ENCODE measurements at regions of chr9 and their contacts with region 1.

Region 1: DNA sequence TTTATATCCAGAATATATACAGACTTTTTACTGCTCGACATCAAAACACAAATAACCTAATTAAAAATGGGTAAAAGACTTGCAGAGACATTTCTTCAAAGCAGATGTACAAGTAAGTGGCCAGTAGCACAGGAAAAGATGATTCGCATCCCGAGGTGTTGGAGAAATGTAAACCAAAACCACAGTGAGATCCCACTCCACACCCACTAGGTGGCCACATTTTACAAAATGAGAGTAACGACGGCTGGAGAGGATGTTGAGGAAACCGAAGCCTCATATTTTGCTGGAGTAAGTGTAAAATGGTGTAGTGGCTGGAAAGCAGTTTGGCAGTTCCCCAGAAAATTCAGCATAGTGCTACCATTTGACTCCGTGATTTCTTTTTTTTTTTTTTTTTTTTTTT is 21.2 kb upstream of the GBGT1 start:
- DNase-seq: peak; percentile 72
- H3K4me3 ChIP-seq: no peak overlapping the region
- H3K27ac ChIP-seq: no peak overlapping the region
- H3K4me1 ChIP-seq: no peaks in the 10 kb centered on the region
- H3K27me3 ChIP-seq: peaks cover 5 to 9% of the 10 kb centered on the region in 2 experiments
- CTCF ChIP-seq: peak; percentile 57 to 60
- POLR2A ChIP-seq: no peak

Region 2: GRCh38 chr9:132965478-132965877 is 219.5 kb before region 1 on chr9:
- CTCF ChIA-PET with region 1: no interaction called
- POLR2A ChIA-PET with region 1: no interaction called
- dilution Hi-C with region 1: no loop called
- intact Hi-C with region 1: no loop called
- DNase-seq: no peak
- H3K4me3 ChIP-seq: no peak overlapping the region
- H3K27ac ChIP-seq: no peak overlapping the region
- H3K4me1 ChIP-seq: no peaks in the 10 kb centered on the region
- H3K27me3 ChIP-seq: peaks cover 2 to 3% of the 10 kb centered on the region in 2 experiments
- CTCF ChIP-seq: no peak
- POLR2A ChIP-seq: no peak

Region 3: GRCh38 chr9:132982458-132982857 is 202.5 kb before region 1 on chr9:
- CTCF ChIA-PET with region 1: no interaction called
- POLR2A ChIA-PET with region 1: no interaction called
- dilution Hi-C with region 1: no loop called
- intact Hi-C with region 1: no loop called
- DNase-seq: no peak
- H3K4me3 ChIP-seq: no peak overlapping the region
- H3K27ac ChIP-seq: no peak overlapping the region
- H3K4me1 ChIP-seq: no peaks in the 10 kb centered on the region
- H3K27me3 ChIP-seq: peaks cover 21% of the 10 kb centered on the region in 2 experiments
- CTCF ChIP-seq: no peak
- POLR2A ChIP-seq: no peak

Region 4: GRCh38 chr9:133089271-133089671 is 95.7 kb before region 1 on chr9:
- CTCF ChIA-PET with region 1: no interaction called
- POLR2A ChIA-PET with region 1: no interaction called
- dilution Hi-C with region 1: no loop called
- intact Hi-C with region 1: no loop called
- DNase-seq: no peak
- H3K4me3 ChIP-seq: no peak overlapping the region
- H3K27ac ChIP-seq: no peak overlapping the region
- H3K4me1 ChIP-seq: no peaks in the 10 kb centered on the region
- H3K27me3 ChIP-seq: no peaks in the 10 kb centered on the region
- CTCF ChIP-seq: no peak
- POLR2A ChIP-seq: no peak

Region 5: GRCh38 chr9:133103183-133103986 is 81.6 kb before region 1 on chr9:
- CTCF ChIA-PET with region 1: interaction called, 3 read pairs
- POLR2A ChIA-PET with region 1: no interaction called
- dilution Hi-C with region 1: no loop called
- intact Hi-C with region 1: loop called (anchors 1 kb)
- DNase-seq: peak; percentile 50
- H3K4me3 ChIP-seq: no peak overlapping the region
- H3K27ac ChIP-seq: no peak overlapping the region
- H3K4me1 ChIP-seq: no peaks in the 10 kb centered on the region
- H3K27me3 ChIP-seq: no peaks in the 10 kb centered on the region
- CTCF ChIP-seq: peak; percentile 90 to 95
- POLR2A ChIP-seq: no peak

Region 6: DNA sequence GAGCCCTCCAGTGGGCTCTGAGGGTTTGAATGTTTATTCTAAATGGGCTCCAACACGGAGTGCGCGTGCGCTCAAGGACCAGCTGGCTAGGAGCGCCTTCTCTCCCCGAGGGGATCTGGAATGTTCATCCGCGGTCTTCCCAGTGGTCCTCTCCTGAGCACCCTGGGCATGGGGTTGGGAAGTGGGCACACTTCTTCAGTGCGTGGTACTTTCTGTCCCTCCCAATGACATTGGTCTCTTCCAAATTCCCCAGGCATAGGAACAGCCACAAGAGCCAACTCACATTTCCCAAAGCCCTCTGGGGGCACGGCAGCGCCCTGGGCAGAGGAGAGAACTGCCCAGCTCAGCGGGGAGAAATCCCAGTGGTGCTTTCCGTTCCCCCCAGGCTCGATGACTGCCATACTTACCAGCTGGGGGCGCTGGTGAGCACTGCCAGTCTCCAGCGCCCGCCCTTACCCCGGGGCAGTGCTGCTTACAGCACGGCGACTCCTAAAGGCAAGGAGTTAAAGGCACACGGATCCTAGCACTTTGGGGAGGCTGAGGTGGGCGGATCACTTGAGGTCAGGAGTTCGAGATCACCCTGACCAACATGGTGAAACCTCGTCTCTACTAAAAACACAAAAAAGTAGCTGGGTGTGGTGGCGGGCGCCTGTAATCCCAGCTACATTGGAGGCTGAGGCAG is 54.0 kb after region 1 on chr9:
- CTCF ChIA-PET with region 1: interaction called, 42 read pairs
- POLR2A ChIA-PET with region 1: no interaction called
- dilution Hi-C with region 1: no loop called
- intact Hi-C with region 1: loop called (anchors 1 kb)
- DNase-seq: peak; percentile 51
- H3K4me3 ChIP-seq: peak overlapping the region in 2 of 3 experiments; percentile 3 to 11
- H3K27ac ChIP-seq: peak overlapping the region; percentile 10
- H3K4me1 ChIP-seq: peaks cover 19% of the 10 kb centered on the region
- H3K27me3 ChIP-seq: peaks cover 2 to 6% of the 10 kb centered on the region in 2 experiments
- CTCF ChIP-seq: peak; percentile 85 to 92
- POLR2A ChIP-seq: no peak

Region 7: GRCh38 chr9:133286523-133286922 is 101.6 kb after region 1 on chr9:
- CTCF ChIA-PET with region 1: interaction called, 10 read pairs
- POLR2A ChIA-PET with region 1: no interaction called
- dilution Hi-C with region 1: no loop called
- intact Hi-C with region 1: no loop called
- DNase-seq: peak; percentile 16
- H3K4me3 ChIP-seq: no peak overlapping the region
- H3K27ac ChIP-seq: no peak overlapping the region
- H3K4me1 ChIP-seq: no peaks in the 10 kb centered on the region
- H3K27me3 ChIP-seq: peaks cover 1 to 4% of the 10 kb centered on the region in 2 experiments
- CTCF ChIP-seq: no peak
- POLR2A ChIP-seq: no peak

Region 8: GRCh38 chr9:133327834-133328484 is 143.0 kb after region 1 on chr9:
- CTCF ChIA-PET with region 1: interaction called, 128 read pairs
- POLR2A ChIA-PET with region 1: interaction called, 4 read pairs
- dilution Hi-C with region 1: no loop called
- intact Hi-C with region 1: loop called (anchors 1 kb)
- DNase-seq: no peak
- H3K4me3 ChIP-seq: no peak overlapping the region
- H3K27ac ChIP-seq: no peak overlapping the region
- H3K4me1 ChIP-seq: no peaks in the 10 kb centered on the region
- H3K27me3 ChIP-seq: no peaks in the 10 kb centered on the region
- CTCF ChIP-seq: no peak
- POLR2A ChIP-seq: no peak

Region 9: DNA sequence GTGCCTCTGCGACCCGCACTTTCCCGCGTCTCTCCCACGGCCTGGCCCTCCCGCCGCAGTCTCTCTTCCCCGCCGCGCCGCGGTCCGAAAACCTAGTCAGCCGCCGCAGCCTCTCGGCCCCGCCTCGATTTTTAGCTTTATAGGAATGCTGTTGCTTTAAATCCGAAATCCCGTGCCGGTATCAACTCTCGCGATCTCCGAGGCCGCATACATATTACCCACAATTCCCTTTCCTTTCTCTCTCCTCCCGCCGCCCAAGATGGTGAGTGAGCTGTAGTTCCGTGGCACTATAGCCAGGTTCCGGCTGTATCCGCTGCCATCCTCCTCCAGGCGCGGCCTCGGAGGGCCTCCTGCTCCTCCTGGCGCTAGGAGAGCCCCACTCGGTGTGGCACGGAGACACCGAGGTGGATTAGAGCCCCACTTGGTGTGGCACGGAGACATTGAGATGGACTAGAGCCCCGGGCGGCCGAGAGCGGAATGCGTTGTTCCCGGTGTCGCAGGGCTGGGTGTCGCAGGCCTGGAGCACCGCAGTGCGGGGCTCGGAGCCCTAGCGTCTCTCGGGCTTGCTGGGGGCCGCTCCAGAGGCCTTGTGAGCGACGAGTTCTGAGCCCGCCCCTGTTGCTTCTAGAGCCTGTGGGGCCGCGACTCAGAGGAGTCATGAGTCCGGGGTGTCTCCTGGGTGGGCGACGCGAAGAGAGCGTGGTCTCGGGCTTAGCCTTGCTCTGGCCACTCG is 163.2 kb after region 1 on chr9 and contains the starts of genes MED22 and RPL7A:
- CTCF ChIA-PET with region 1: interaction called, 7 read pairs
- POLR2A ChIA-PET with region 1: no interaction called
- dilution Hi-C with region 1: no loop called
- intact Hi-C with region 1: loop called (anchors 5 kb)
- DNase-seq: peak; percentile 97
- H3K4me3 ChIP-seq: peak within 1 kb of the TSS; percentile 69 to 84 (median 83)
- H3K27ac ChIP-seq: peak within 1 kb of the TSS; percentile 91
- H3K4me1 ChIP-seq: peaks cover 14% of the 10 kb centered on the region
- H3K27me3 ChIP-seq: no peaks in the 10 kb centered on the region
- CTCF ChIP-seq: no peak
- POLR2A ChIP-seq: peak; percentile 98
- total RNA-seq, gene MED22: 26.7 and 27.4 TPM in 2 replicates
- total RNA-seq, gene RPL7A: 2,043 and 2,112 TPM in 2 replicates

Region 10: GRCh38 chr9:133485361-133486260 is 300.6 kb after region 1 on chr9:
- CTCF ChIA-PET with region 1: interaction called, 142 read pairs
- POLR2A ChIA-PET with region 1: no interaction called
- dilution Hi-C with region 1: no loop called
- intact Hi-C with region 1: loop called (anchors 1 kb)
- DNase-seq: no peak
- H3K4me3 ChIP-seq: no peak overlapping the region
- H3K27ac ChIP-seq: no peak overlapping the region
- H3K4me1 ChIP-seq: no peaks in the 10 kb centered on the region
- H3K27me3 ChIP-seq: no peaks in the 10 kb centered on the region
- CTCF ChIP-seq: no peak
- POLR2A ChIP-seq: no peak